GM12878 (cell line): ENCODE measurements at regions of chr7 and their contacts with region 1.

Region 1: DNA sequence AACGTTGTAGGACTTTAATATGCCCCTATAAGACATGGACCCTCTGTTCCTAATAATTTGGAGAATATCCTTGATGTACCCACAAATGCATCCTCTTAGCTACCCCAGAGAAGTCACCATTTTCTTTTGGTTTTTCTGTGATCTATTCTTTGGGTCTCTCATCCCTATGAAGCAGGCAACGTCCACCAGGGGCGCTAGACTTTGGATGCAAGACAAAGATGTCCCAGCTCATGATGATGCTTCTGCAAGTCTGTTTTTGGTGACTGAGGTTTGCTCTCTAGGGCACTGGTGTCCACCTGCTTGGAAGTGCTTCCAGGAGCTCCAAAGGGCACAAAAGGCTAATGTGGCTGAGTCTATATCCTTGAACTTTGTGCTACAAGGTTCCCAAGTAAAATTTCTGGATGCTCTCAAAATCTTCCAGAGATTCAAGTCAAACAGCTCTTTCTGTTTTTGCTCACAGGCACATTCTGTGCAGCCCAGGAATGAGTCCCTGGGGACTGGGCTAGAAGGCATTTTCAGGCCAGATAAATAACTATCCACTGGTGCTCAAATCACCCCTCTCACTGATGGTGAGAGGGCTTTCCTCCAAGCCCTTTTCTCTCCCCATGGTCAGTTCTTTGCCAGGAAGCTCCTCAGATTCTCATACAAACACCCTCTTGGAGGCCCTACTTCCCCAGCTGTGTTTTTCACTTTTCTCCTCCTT is 166.4 kb downstream of the C7orf25 start:
- DNase-seq: no peak
- ATAC-seq: peak; percentile 57
- H3K4me3 ChIP-seq: no peak overlapping the region
- H3K27ac ChIP-seq: no peak overlapping the region
- H3K4me1 ChIP-seq: no peaks in the 10 kb centered on the region
- H3K27me3 ChIP-seq: no peaks in the 10 kb centered on the region; a peak in 1 of 4 replicates
- CTCF ChIP-seq: peak; percentile 42 to 73 (median 69)
- EP300 ChIP-seq: no peak
- POLR2A ChIP-seq: no peak
- RAD21 ChIP-seq: no peak

Region 2: DNA sequence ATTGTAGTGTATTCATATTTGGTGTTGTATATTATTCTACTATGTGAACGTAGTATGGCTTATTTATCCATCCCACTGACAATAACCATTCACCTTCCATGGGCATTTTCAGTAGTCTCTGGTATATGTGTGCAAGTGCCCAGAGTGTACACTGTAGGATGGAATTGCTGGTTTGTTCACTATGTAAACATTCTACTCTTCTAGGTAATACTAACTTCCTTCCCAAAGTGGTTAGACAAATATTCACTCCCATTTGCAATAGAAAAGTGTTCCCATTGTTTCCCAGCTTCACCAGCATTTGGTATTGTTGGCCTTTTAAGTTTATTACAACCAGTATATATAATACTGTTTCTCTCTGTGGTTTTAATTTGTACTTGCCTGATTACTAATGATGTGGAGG is 12.6 kb after region 1 on chr7:
- CTCF ChIA-PET with region 1: interaction called, 14 read pairs
- POLR2A ChIA-PET with region 1: no interaction called
- RAD21 ChIA-PET with region 1: no interaction called
- SMC1A ChIA-PET with region 1: no interaction called
- in situ Hi-C with region 1: no loop called
- intact Hi-C with region 1: no loop called
- DNase-seq: no peak
- ATAC-seq: no peak
- H3K4me3 ChIP-seq: no peak overlapping the region
- H3K27ac ChIP-seq: no peak overlapping the region
- H3K4me1 ChIP-seq: no peaks in the 10 kb centered on the region
- H3K27me3 ChIP-seq: no peaks in the 10 kb centered on the region
- CTCF ChIP-seq: no peak
- EP300 ChIP-seq: no peak
- POLR2A ChIP-seq: no peak
- RAD21 ChIP-seq: no peak